Gastrocnemius medialis (tissue), 4 donors: ENCODE measurements at regions of chr17 and their contacts with region 1.

Region 1: DNA sequence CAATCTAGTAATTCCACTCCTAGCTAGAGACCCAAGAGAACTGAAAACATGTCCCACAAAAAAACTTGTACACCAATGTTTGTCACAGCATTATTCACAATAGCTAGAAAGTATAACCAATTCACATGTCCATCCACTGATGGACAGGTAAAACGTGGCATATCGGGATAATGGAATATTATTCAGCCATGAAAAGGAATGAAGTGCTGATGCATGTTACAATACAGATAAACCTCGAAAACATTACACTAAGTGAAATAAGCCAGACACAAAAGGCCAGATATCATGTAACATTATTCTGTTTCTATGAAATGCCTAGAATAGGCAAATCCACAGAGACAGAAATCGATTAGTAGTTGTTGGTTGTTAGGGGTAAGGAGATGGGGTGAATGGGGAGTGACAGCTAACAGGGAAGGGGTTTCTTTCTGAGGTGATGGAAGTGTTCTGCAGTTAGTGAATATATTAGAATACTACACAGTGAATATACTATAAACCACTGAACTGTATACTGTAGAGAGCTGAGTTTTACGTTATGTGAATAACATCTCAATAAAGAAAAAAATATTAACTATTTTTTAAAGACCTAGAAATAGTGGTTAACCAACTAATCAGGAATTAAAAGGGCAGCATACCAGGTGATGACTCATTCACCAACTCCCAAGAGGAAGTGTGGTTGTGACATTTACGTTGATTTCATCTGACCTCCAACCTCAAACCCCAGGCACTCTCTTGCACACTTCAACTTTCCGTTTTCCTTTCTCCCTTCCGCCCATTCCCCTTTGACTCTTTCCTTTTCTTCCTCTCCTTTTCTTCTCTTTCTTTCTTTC is 48.6 kb downstream of the GAS7 start:
- DNase-seq: no peak
- ATAC-seq: no peak
- H3K4me3 ChIP-seq: no peak overlapping the region
- H3K27ac ChIP-seq: no peak overlapping the region
- H3K4me1 ChIP-seq: no peaks in the 10 kb centered on the region
- H3K27me3 ChIP-seq: no peaks in the 10 kb centered on the region
- CTCF ChIP-seq: no peak
- POLR2A ChIP-seq: no peak

Region 2: DNA sequence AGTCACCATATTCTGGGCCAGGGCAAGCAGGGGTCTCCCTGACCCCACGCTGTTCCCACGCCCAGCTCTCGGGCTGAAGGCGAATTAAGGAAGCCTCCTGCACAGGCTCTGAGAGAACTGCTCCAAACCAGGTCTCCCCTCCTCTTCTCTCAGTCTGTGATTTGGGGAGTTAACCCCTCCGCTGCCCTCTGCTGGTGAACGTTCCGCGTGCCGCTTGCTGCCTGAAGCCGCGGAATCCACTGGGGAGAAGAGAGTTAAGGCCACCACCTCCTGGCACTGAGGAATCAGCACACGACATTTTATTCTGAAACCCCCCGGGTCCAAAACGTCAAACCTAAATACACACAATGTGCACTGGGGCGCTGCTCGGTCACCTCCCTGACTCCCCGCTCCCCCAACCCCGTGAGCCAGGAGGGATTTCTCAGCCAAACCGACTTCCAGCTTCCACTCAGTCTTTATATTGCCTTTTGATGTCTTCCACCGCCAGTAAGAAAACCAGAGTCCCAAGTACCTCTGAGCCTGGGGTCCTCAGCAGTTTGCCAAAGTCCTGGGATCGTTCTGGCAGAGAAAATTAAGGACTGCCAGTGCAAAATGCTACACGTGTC is 190.3 kb before region 1 on chr17:
- in situ Hi-C with region 1: loop called in 1 of 4 experiments (anchors 25 kb)
- intact Hi-C with region 1: no loop called
- DNase-seq: no peak
- ATAC-seq: peak in 1 of 2 donors; percentile 39
- H3K4me3 ChIP-seq: no peak overlapping the region
- H3K27ac ChIP-seq: no peak overlapping the region
- H3K4me1 ChIP-seq: no peaks in the 10 kb centered on the region
- H3K27me3 ChIP-seq: peaks cover 0 to 4% (median 0%) of the 10 kb centered on the region in 3 donors
- CTCF ChIP-seq: peak in 3 of 5 experiments; percentile 24 to 35 (median 35)
- POLR2A ChIP-seq: no peak

Region 3: DNA sequence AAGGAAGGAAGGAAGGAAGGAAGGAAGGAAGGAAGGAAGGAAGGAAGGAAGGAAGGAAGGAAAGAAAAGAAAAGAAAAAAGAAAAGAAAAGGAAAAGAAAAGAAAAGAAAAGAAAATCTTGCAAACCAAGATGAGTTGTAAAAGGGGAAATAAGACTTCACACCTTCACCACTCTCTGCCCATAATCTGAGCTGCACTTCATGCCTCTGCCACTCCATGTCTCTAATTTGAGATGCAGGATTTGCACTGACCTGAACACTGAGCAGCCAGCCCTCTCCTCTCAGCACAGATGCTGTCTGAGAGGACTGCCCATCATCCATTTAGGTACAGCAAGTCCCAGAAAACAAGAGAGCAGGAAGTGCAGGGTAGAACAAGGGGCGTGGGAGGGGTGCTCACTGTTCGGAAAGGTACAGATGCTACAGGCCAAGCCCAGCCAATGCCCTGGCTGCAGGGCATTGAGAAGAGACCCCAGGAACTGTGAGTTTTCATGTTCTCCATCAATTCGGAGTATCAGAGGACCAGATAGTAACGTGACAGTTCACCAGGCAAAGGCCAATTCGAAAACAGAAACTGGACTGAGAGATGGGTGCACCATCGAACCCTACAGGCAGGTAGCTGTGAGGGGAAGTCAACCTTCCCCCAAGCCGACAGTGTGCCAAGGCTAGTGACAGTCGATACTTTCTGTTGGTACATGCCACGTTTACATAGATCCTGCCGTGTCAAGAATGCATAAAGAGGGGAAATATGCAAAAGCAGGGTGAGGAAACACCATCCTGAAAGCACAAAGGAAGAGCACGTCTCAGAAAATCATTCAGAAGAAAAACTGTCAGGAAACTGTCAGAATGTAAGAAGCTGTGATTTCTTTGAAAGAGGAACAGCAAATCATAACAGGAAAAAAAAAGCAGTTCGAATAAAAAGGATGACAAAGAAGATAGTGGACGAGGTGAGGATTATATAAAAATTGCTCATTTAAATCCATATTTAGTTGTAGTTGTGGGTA is 102.7 kb before region 1 on chr17:
- in situ Hi-C with region 1: loop called in 1 of 4 experiments (anchors 25 kb)
- intact Hi-C with region 1: no loop called
- DNase-seq: no peak
- ATAC-seq: no peak
- H3K4me3 ChIP-seq: no peak overlapping the region
- H3K27ac ChIP-seq: no peak overlapping the region
- H3K4me1 ChIP-seq: no peaks in the 10 kb centered on the region
- H3K27me3 ChIP-seq: no peaks in the 10 kb centered on the region
- CTCF ChIP-seq: no peak
- POLR2A ChIP-seq: no peak